ENCODE measurements at regions of chr7 and their contacts with region 1.

Region 1: GRCh38 chr7:132773527-132773956 is 197.3 kb upstream of the PLXNA4 start:
- DNase-seq: peak; percentile 66
- H3K4me3 Mint-ChIP-seq: no peak overlapping the region
- H3K27ac Mint-ChIP-seq: peak overlapping the region; percentile 76
- H3K4me1 Mint-ChIP-seq: peaks cover 13% of the 10 kb centered on the region
- H3K27me3 Mint-ChIP-seq: no peaks in the 10 kb centered on the region
- CTCF ChIP-seq: no peak

Region 2: DNA sequence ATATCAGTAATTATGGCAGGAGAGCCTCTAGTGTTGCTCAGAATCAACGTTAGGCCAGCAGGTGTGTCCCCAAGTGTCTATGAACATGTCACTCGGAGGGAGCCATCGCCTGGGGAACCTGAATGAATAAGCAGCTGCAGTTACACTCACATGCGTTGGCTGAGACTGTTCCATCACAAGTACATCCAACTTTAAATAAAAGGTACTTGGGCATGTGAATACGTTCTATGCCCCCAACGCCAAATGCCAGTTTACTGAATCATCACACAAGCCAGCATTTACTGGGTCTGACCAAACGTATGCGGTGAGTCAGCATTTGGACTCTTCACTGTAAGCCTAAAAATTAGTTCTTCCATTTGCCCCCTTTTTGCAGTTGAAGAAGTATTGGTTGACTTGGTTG is 10.3 kb after region 1 on chr7:
- CTCF ChIA-PET with region 1: interaction called, 3 read pairs
- POLR2A ChIA-PET with region 1: interaction called, 10 read pairs
- intact Hi-C with region 1: no loop called
- DNase-seq: peak; percentile 88
- H3K4me3 Mint-ChIP-seq: no peak overlapping the region
- H3K27ac Mint-ChIP-seq: peak overlapping the region; percentile 74
- H3K4me1 Mint-ChIP-seq: peaks cover 14% of the 10 kb centered on the region
- H3K27me3 Mint-ChIP-seq: no peaks in the 10 kb centered on the region
- CTCF ChIP-seq: no peak

Region 3: DNA sequence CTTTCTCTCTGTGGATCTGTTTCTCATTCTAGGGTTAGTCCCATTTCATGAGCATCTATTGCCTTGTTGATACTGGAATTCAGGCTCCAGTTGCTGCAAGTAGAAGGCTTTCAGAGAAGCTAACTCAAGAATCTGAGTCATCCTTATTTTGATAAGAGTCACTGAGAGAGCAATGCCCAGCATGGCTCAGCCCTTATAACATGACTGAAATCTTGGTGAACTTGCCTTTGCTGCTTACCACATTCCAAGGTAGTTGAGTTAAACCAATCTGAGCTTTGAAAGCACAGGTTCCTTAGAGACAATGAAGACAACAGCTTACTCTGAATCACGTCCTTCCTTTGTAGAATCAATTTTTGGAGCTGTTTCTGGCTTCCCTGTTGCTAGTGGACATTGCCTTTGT is 361.9 kb after region 1 on chr7:
- CTCF ChIA-PET with region 1: no interaction called
- POLR2A ChIA-PET with region 1: no interaction called
- intact Hi-C with region 1: no loop called
- DNase-seq: no peak
- H3K4me3 Mint-ChIP-seq: no peak overlapping the region
- H3K27ac Mint-ChIP-seq: no peak overlapping the region
- H3K4me1 Mint-ChIP-seq: no peaks in the 10 kb centered on the region
- H3K27me3 Mint-ChIP-seq: peaks cover 49% of the 10 kb centered on the region
- CTCF ChIP-seq: no peak